ENCODE measurements at regions of chr2 and their contacts with region 1.

Region 1: DNA sequence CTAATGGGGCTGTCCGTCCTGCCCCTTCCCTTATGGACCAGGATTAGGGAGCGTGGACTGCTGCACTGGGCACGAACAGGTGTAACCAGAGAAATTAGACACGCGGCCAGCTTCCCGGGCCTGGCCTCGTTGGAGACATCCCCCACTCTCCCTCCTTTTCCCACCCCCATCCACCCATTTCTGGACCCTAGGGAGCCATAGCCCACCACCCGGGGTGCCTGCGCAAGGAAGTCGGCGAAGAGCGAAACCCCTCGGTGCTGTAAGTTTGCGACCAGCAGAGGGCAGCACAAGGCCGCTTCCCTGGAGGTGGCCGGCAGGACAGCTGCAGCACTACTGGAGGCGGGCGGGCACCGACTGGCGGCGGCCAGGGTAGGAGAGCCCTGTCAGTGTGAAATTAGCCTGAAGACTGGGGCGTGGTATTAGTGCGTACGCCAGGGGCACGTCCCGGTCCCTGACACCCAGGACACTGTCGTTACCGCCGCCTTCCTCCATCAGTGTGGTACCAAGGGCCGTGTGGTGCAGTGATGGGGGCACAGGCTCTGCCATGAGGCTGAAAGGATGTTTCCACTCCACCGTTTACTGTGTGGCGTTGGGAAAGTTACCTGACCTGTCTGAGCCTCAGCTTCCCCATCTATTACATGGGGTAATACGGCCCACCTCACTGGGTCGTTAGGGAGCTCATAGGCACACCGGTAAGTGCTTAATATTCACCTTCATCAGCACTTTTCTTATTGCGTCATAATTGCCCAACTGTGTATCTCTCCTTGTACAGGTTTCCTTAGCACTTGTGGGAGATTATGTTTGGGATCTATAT is 36.0 kb upstream of the CD207 start:
- DNase-seq: peak; percentile 72 to 91
- ATAC-seq: peak; percentile 98

Region 2: DNA sequence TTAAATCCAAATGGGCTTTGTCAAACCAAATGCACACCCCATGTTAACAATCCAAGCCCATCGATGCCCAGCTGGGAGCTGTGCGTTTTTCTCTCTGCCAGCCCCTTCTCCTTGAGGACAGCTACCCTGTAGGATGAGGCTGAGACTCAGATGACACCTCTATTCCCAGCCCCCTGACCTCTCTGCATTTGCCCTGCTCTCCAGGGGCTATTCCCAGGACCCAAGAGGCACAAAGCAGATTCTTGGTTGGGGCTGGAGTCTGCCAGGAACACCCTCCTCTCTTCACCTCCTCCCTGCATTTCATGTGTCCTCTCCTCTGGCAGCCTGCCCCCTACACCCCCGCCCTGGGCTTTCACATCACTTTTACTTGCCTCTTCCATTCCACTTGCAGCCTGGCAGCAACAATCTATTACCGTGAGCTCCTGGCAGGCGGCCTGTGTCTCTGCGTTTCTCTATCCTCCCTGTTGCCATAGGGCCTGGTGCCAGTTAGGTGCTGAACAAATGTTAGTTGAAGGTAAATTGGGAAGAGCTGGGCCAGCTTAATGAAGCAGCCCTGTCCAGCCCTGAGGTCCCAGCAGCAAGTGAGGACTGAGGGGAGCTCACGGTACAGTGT is 155.4 kb before region 1 on chr2:
- intact Hi-C with region 1: no loop called
- DNase-seq: no peak
- ATAC-seq: no peak

Region 3: GRCh38 chr2:70919672-70920366 is 48.2 kb after region 1 on chr2:
- intact Hi-C with region 1: loop called (anchors 5 to 10 kb)
- DNase-seq: peak; percentile 60 to 83
- ATAC-seq: peak; percentile 91

Region 4: GRCh38 chr2:70948337-70949003 is 76.9 kb after region 1 on chr2:
- intact Hi-C with region 1: loop called in 1 of 2 experiments (anchors 5 kb)
- DNase-seq: peak; percentile 60 to 83
- ATAC-seq: peak; percentile 88